IMR-90 (cell line): ENCODE measurements at regions of chr1 and their contacts with region 1.

Region 1: GRCh38 chr1:147579532-147579931 is 38.2 kb downstream of the BCL9 start:
- DNase-seq: peak; percentile 80
- ATAC-seq: peak; percentile 91
- H3K4me3 ChIP-seq: no peak overlapping the region; the same call in 1 of the 2 replicates
- H3K27ac ChIP-seq: peak overlapping the region; percentile 67; the same call in 1 of the 2 replicates
- H3K4me1 ChIP-seq: peaks cover 6% of the 10 kb centered on the region
- H3K27me3 ChIP-seq: 0 out of 2 replicates have a peak, but pooled peaks cover 1% of the 10 kb centered on the region
- CTCF ChIP-seq: no peak
- POLR2A ChIP-seq: no peak
- RAD21 ChIP-seq: no peak

Region 2: DNA sequence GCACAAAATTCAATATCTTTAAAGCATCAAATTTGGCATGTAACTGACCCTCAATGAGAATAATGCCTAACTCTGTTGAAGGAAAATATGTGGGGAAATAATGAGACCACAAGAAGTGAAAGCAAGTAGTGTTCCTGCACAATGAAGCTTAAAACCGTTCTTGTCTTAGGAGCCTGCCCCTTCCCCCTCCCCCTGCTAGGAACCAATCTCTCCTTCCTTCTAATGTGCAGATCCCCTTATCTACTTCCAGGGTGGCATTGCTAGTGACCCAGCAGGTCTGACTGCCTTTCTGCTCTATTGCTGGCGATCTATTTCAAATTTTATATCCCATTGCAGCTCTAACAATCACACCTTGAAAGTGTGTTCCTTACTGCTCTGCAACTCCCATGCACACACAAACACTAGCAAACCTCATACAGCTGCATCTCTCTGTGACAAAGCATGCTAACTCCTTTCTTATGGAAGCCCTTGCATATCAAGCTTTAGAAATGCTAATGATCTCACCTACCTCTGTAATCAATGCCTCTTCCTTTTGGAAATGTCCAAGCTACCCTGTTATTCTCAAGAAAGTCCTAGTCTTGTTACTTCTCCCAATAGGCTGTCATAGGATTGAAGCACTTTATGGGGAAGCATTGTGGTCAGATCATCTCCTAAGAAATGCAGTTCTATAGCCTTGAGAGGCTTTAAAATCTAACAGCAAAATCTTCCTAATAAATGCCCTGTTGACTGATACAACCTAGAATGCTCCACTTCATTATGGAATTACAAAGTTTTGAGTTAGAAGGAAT is 11.7 kb before region 1 on chr1:
- CTCF ChIA-PET with region 1: interaction called, 3 read pairs
- POLR2A ChIA-PET with region 1: no interaction called
- dilution Hi-C with region 1: no loop called
- in situ Hi-C with region 1: no loop called
- intact Hi-C with region 1: loop called (anchors 1 kb)
- DNase-seq: no peak
- ATAC-seq: no peak
- H3K4me3 ChIP-seq: no peak overlapping the region
- H3K27ac ChIP-seq: no peak overlapping the region
- H3K4me1 ChIP-seq: 0 out of 2 replicates have a peak, but pooled peaks cover 1% of the 10 kb centered on the region
- H3K27me3 ChIP-seq: no peaks in the 10 kb centered on the region
- CTCF ChIP-seq: no peak
- POLR2A ChIP-seq: no peak
- RAD21 ChIP-seq: no peak